ENCODE measurements at regions of chr19 and their contacts with region 1.

Region 1: DNA sequence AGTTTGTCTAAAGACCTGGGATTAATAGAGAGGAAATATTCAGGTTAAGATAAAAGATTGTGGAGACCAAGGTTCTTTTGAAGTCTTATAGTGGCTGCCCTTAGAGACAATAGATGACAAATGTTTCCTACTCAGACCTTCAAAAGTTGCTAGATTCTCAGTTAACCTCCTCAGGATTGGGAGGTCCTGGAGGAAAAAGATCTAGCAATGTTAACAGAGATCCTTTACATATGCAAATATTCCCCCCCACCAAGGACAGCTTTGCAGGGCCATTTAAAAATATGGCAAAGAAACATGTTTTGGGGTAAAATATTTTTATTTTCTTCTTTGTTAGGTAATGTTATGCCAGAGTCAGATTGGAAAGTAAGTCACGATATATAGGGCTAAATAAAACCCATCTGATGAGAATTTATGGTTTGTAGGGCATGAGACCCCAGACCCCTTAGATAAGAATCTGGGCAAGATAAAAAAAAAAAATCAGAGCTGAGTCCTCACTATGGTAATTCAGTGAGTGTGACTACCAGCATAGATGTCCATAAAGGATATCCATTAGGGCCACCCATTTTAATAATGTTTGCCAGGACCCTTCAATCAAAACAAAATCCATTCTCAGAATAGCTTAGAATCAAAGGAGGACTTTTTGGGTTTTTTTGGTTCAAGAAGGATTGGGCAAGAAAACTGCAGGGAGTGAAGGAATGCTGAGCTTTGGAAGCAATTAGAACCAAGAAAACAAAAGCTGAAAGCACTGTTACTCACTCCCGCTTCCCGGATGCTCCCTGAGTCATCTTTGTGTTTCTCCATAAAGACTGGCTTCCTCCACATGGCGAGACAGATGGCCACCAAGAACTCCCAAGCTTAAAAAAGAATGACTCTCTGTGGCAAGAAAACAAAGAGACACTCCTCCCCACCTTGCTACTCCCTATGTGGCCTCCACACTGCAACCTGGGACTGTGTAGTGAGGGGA is 28.2 kb downstream of the VSTM1 start:
- DNase-seq: no peak
- CTCF ChIP-seq: no peak

Region 2: DNA sequence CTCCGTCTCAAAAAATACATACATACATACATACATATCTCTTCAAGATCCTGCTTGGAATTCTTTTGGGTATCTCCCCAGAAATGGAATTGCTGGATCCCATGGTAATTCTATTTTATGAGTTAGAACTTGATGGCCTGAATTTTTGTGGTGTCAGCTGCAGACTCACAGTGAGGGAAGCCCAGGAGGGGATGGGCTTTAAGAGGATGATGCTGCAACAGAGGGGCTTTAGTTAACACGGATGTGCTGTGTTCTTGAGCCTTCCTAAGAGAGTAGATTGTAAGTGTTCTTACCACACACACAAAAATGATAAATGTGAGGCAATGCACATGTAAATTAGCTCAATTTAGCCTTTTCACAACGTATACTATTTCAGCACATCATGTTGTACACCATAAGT is 12.3 kb before region 1 on chr19:
- CTCF ChIA-PET with region 1: interaction called, 16 read pairs
- POLR2A ChIA-PET with region 1: no interaction called
- DNase-seq: no peak
- CTCF ChIP-seq: no peak

Region 3: GRCh38 chr19:54209811-54210494 is 174.5 kb after region 1 on chr19:
- CTCF ChIA-PET with region 1: no interaction called
- POLR2A ChIA-PET with region 1: no interaction called
- DNase-seq: no peak
- CTCF ChIP-seq: no peak